ENCODE measurements at regions of chr12 and their contacts with region 1.

Region 1: GRCh38 chr12:57632694-57633477 is at the start of gene B4GALNT1:
- DNase-seq: peak; percentile 68 to 88
- H3K4me3 ChIP-seq: peak within 1 kb of the TSS; percentile 51 to 64 (median 56)
- H3K27ac ChIP-seq: peak within 1 kb of the TSS in 1 of 5 donors; percentile 60
- H3K4me1 ChIP-seq: peaks cover 13 to 25% (median 22%) of the 10 kb centered on the region in 4 donors
- H3K27me3 ChIP-seq: peaks cover 0 to 79% (median 54%) of the 10 kb centered on the region in 3 donors
- CTCF ChIP-seq: peak in 5 of 7 experiments; percentile 70 to 92 (median 89)
- EP300 ChIP-seq: no peak
- POLR2A ChIP-seq: no peak
- total RNA-seq, gene B4GALNT1: 1.1 TPM in 1 of 5 donors, not detected in the others

Region 2: DNA sequence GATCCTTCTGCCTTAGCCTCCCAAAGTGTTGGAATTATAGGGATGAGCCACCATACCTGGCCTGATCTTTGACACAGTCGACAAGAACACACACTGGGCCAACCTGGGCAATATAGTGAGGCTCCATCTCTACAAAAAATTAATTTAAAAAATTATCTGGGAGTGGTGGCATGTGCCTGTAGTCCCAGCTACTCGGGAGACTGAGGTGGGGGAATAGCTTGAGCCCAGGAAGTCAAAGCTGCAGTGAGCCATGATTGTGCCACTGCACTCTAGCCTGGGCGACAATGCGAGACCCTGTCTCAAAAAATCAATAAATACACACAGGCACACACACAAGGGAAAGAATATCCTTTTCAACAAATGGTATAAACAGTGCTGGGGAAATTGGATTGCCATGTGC is 55.0 kb after region 1 on chr12:
- intact Hi-C with region 1: loop called (anchors 10 kb)
- DNase-seq: no peak
- H3K4me3 ChIP-seq: no peak overlapping the region
- H3K27ac ChIP-seq: no peak overlapping the region
- H3K4me1 ChIP-seq: peaks cover 0 to under 1% (median 0%) of the 10 kb centered on the region in 4 donors
- H3K27me3 ChIP-seq: peaks cover 0 to 33% (median 0%) of the 10 kb centered on the region in 3 donors
- CTCF ChIP-seq: no peak
- EP300 ChIP-seq: no peak
- POLR2A ChIP-seq: no peak

Measured in stomach (tissue), 19 donors.